Left ventricle myocardium superior (tissue), 1 donor: ENCODE measurements at regions of chr3 and their contacts with region 1.

Region 1: DNA sequence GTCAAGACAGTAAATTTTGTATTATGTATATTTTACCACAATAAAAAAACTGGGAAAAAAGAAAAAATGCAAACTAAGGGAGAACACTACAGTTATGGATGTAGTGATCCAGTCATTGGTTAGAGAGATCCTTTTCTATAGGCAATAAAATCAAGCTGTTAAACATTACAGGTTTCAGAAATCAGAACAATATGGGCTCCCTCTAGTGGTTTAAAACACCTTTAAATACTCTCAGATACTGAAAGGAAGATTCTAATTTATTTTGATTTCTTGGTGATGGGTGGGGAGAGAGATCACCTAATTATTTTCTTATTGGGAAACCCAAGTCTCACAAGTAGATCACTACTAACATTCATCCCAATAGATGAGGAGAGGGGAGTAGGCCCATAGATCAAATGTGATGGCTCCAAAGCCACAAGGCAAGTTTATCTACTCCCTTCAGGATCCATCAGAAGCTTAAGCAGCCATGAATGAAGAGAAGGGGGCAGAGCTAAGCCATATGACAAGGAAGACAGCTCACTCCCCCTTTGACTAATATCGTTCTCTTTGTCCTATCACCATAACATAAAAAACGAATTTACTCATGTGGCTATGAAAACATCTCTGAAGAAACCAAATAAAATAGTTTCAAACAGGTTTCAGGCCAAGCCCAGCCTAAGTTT is 118.6 kb downstream of the ANO10 start:
- DNase-seq: no peak
- ATAC-seq: no peak

Region 2: DNA sequence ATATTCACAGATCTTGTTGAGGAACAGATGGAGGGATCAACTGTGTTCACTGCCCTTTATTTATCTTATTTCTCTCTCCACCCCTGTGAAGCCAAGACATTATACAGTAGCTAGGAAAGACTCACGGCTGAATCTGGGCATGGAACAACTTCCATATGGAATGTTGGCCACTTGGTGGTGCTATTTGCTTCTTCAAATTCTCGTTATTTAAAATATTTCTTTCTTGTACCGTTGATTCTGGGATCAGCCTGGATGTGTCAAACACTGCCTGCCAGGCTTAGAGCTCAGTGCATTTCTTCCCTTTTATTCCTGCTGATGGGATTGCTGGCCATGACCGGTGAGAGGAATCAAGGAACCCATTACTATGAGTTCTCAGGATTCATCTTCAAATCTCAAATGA is 541.6 kb before region 1 on chr3:
- intact Hi-C with region 1: loop called (anchors 10 kb)
- DNase-seq: no peak
- ATAC-seq: peak; percentile 68

Region 3: DNA sequence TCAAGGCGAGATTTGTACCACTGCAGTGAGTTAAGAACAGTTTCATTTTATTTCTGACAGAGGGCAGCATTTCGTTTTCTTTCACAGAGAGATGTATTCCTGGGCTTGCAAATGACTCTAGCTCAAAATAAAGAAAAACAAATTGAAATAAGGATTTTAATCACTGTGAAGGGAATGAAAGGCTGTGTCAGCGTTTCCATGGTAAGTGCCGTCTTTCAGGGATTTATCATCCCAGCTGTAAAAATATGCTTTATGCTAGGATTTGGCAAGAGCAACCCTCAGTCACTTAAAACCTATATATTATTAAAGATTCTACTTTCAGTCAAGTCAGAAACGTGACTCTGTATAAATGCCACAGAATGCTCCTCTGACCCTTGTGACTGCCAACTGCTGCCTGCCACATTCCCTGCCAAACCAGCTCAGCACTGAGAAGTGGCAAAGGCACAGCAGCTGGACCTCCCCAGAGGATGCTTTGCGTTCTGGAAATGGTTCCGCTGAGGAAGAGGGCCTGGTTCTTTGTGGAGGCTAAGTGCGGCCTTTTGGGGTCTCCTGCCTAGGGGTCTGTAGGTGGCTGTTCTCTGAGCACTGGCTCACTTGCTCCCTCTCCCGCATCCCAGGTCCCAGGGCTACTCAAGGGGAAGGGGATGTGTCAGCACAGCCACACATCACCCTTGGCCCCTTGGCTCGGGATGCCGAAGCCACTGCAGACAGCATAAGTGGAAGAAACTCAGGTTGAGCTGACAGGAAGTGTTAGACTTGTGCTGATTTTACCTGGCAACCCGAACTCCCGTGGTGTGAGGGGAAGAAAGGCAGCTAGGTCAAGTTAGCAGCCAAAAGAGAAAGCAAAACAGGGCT is 340.7 kb before region 1 on chr3:
- intact Hi-C with region 1: loop called (anchors 2 kb)
- DNase-seq: no peak
- ATAC-seq: peak; percentile 71